Activated CD4-positive, alpha-beta memory T cell treated with anti-CD3 and anti-CD28 coated beads, Interleukin-2, amount 10 ng/mL, durations not matched to agents 7 days and 5 days (primary cell): ENCODE measurements at regions of chr11 and their contacts with region 1.

Region 1: GRCh38 chr11:62081378-62082291 is 42.2 kb upstream of the INCENP start:
- DNase-seq: peak; percentile 83
- H3K4me3 Mint-ChIP-seq: no peak overlapping the region
- H3K27ac Mint-ChIP-seq: no peak overlapping the region
- H3K4me1 Mint-ChIP-seq: peaks cover 8% of the 10 kb centered on the region
- H3K27me3 Mint-ChIP-seq: no peaks in the 10 kb centered on the region

Region 2: DNA sequence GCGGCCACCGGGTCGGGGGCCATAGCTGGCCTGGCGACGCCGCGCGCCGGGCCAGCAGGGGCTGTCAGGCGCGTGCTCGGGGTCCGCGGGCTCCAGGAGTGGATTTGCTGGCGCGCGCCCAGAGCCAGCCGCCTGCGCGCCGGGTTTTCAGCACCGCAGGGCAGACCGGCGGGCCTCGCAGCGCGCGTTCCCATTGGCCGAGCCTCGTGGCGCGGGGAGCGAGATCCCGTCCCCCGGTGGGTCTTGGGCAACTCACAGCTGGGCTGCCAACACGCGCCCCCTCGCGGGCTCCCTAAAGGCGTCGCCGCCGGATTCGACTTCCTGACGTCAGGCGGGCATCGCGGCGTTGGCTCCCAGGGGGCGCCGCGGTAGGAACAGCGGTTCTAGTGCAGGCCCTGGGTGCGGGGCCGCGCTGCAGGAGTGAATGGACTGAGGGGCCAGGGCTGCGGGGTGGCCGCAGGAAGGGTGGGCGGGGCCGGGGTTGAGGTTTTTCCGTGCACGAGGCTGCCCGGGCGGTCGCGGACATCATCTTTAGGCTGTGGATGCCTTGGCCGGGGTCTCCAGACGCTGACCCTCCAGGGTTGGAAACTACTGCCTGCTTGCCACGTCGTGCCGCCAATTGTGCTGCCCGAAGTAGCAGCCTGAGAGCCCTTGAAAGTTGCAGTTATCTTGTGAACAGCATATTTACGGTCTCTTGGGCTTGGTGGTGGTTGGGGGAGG is 264.7 kb before region 1 on chr11 and contains the start of gene FADS1:
- CTCF ChIA-PET with region 1: interaction called, 10 read pairs
- POLR2A ChIA-PET with region 1: no interaction called
- DNase-seq: peak; percentile 88
- H3K4me3 Mint-ChIP-seq: peak within 1 kb of the TSS; percentile 97
- H3K27ac Mint-ChIP-seq: peak within 1 kb of the TSS; percentile 83
- H3K4me1 Mint-ChIP-seq: peaks cover 11% of the 10 kb centered on the region
- H3K27me3 Mint-ChIP-seq: peaks cover 11% of the 10 kb centered on the region
- total RNA-seq, gene FADS1: 63.6 to 68.2 TPM

Region 3: DNA sequence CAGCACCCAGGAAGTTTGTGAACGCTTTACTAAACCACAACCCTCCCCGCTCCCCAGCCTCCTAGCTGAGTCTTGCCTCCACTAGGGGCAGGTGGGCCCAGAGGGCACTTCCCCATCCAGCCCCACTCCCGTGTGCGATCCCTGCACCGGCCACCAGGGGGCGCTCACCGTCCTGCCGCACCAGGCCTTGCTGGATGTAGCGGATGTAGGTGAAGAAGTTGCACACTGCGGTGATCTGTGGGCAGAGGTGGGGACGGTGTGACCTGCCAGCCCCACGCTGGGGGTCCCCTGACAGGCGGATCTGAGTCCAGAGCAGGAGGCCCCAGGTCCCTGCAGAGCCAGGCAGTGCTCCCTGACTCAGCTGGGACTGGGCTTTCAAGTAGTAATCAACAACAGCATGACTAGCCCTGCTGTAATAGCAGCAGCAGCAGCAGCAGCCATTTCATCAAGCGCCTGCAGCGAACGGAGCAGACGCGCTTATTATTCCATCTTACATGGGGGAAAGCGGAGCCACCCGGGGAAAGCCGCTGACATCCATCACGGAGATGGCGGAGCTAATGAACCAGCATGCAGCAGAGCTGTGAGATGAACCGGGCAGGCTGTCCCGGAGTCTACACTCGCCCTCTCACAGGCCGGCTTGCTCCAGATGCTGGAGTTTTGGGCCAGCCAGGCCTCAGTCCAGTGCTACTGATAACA is 182.3 kb before region 1 on chr11:
- CTCF ChIA-PET with region 1: interaction called, 295 read pairs
- POLR2A ChIA-PET with region 1: interaction called, 16 read pairs
- DNase-seq: peak; percentile 91
- H3K4me3 Mint-ChIP-seq: no peak overlapping the region
- H3K27ac Mint-ChIP-seq: no peak overlapping the region
- H3K4me1 Mint-ChIP-seq: peaks cover 4% of the 10 kb centered on the region
- H3K27me3 Mint-ChIP-seq: peaks cover 2% of the 10 kb centered on the region

Region 4: DNA sequence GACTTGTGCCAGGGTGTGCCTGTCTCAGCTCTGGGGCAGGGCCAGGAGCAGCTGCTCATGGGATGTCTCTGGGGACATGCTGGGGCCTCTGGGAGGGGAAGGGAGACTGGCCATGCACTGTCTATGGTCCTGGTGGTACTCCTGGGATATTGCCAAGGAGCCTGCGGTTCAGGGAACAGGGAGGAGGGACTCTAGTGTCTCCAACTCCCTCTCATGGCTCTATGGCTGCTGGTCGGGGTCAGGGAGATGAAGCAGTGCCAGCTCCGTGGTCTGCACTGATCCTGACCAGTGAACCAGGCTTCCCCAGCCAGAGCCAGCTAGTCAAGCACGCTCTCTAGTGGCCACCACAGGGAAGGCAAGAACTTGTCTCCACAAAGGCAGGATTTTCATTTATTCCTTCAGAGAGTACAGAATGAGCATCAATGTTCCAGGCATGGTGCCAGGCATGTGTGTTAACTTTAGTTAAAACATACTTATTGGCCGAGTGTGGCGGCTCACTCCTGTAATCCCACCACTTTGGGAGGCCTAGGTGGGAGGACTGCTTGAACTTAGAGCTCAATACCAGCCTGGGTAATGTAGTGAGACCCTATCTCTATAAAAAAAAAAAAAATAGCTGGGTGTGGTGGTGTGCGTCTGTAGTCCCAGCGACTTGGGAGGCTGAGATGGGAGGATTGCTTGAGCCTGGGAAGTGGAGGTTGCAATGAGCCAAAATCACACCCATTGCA is 134.0 kb before region 1 on chr11:
- CTCF ChIA-PET with region 1: interaction called, 96 read pairs
- POLR2A ChIA-PET with region 1: interaction called, 3 read pairs
- DNase-seq: peak; percentile 73
- H3K4me3 Mint-ChIP-seq: no peak overlapping the region
- H3K27ac Mint-ChIP-seq: no peak overlapping the region
- H3K4me1 Mint-ChIP-seq: peaks cover 2% of the 10 kb centered on the region
- H3K27me3 Mint-ChIP-seq: peaks cover 5% of the 10 kb centered on the region

Region 5: DNA sequence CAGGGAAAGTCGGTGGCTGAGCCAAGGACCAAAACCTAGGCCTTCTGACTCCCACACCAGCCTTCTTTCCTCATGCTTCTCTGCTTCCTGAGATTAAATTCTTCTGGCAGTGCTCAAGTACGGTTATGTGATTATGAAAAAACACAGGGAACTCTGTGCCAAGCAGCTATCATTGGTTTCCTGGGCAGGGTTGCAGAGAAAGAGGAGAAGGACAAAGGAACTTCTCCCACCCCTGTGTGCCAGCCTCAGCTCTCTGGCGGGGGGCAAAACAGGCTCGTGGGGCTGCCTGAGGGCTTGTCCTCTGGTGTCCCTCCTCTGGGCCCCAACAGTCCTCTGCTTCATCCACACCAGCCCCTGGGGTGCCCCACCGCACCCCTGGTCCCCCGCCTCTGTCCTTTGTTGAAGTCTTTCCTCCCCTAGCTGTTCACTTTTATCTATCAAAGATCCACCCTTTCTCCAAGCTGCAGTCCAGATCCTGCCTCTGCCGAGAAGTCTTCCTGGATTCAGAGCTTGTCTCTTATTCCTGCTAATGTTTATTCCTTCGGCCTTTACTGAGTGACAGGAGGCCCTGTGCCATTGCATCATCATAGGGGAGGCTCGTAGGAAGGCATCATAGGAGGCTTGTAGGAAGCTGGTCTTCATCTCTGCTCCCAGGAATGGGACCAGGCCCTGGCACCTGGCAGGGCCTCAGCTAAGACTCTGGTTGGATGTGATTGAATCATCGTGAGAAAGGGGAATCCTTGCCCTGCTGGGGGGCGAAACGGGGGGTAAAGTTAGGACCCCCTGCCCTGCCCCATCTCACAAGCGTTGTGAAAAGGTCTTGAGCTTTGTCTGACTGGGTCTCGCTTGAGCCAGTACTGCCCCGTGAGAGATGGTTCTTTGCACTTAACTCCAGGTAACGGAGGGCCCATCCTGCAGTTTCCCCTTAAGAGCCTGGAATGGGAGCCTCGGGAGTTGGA is 102.7 kb before region 1 on chr11:
- CTCF ChIA-PET with region 1: interaction called, 13 read pairs
- POLR2A ChIA-PET with region 1: no interaction called
- DNase-seq: no peak
- H3K4me3 Mint-ChIP-seq: no peak overlapping the region
- H3K27ac Mint-ChIP-seq: no peak overlapping the region
- H3K4me1 Mint-ChIP-seq: peaks cover 14% of the 10 kb centered on the region
- H3K27me3 Mint-ChIP-seq: no peaks in the 10 kb centered on the region

Region 6: GRCh38 chr11:62064226-62064625 is 17.4 kb before region 1 on chr11:
- CTCF ChIA-PET with region 1: interaction called, 21 read pairs
- POLR2A ChIA-PET with region 1: no interaction called
- DNase-seq: no peak
- H3K4me3 Mint-ChIP-seq: no peak overlapping the region
- H3K27ac Mint-ChIP-seq: no peak overlapping the region
- H3K4me1 Mint-ChIP-seq: peaks cover 3% of the 10 kb centered on the region
- H3K27me3 Mint-ChIP-seq: peaks cover 2% of the 10 kb centered on the region